HCT116 (cell line): ENCODE measurements at regions of chr4 and their contacts with region 1.

Region 1: DNA sequence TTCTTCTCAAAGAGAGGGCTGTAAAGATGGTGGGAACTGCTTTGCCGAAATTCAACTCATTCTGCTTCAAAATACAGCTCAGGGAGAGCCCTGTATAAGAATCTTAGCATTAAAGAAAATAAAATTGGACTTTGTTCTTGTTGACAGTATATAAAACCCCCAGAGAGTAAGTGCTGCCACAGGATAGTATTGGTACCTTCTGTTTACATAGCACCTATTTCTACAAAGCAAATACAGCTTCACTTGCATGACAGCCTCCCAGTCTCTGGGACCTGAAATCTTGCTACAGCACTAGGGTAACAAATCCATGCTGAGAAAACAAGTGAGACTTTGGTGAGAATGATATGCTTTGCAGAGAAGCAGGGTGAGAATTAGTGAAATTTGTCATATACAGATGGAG is 428.6 kb downstream of the ADGRL3 start:
- DNase-seq: no peak
- ATAC-seq: no peak
- H3K4me3 ChIP-seq: no peak overlapping the region
- H3K27ac ChIP-seq: no peak overlapping the region
- H3K4me1 ChIP-seq: no peaks in the 10 kb centered on the region
- H3K27me3 ChIP-seq: no peaks in the 10 kb centered on the region
- CTCF ChIP-seq: no peak
- POLR2A ChIP-seq: no peak
- RAD21 ChIP-seq: no peak

Region 2: DNA sequence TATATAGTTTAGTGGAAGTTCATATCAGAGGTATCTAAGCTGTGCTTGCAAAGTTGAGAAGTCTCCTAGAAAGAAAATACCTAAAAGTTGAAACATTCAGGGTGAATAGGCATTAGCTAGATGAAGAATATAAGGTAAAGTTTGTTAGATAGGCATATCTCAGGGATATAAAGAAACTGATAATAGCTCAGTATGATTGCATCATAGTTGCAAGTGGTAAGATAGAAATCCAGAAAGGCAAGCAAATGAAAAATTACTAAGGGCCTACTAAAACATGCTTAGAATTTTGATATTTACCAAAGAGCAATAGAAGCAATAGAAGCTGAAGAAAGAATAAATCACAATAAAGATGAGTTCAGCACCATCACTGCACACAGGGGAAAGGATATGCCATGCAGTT is 1038.6 kb before region 1 on chr4:
- CTCF ChIA-PET with region 1: no interaction called
- POLR2A ChIA-PET with region 1: no interaction called
- RAD21 ChIA-PET with region 1: no interaction called
- intact Hi-C with region 1: loop called (anchors 10 kb)
- DNase-seq: no peak
- ATAC-seq: no peak
- H3K4me3 ChIP-seq: no peak overlapping the region
- H3K27ac ChIP-seq: no peak overlapping the region
- H3K4me1 ChIP-seq: no peaks in the 10 kb centered on the region
- H3K27me3 ChIP-seq: no peaks in the 10 kb centered on the region
- CTCF ChIP-seq: no peak
- POLR2A ChIP-seq: no peak
- RAD21 ChIP-seq: no peak